Transverse colon (tissue), 4 donors: ENCODE measurements at regions of chr4 and their contacts with region 1.

Region 1: GRCh38 chr4:123396307-123397143 is at the start of gene SPRY1:
- DNase-seq: peak; percentile 93
- H3K4me3 ChIP-seq: peak within 1 kb of the TSS; percentile 67 to 89 (median 75)
- H3K27ac ChIP-seq: peak within 1 kb of the TSS; percentile 91 to 95 (median 95)
- H3K4me1 ChIP-seq: peaks cover 0 to 16% (median 0%) of the 10 kb centered on the region in 4 donors
- H3K27me3 ChIP-seq: no peaks in the 10 kb centered on the region
- CTCF ChIP-seq: no peak
- EP300 ChIP-seq: no peak
- POLR2A ChIP-seq: peak; percentile 85
- total RNA-seq, gene SPRY1: 22.1 to 47.2 (median 33.7) TPM

Region 2: DNA sequence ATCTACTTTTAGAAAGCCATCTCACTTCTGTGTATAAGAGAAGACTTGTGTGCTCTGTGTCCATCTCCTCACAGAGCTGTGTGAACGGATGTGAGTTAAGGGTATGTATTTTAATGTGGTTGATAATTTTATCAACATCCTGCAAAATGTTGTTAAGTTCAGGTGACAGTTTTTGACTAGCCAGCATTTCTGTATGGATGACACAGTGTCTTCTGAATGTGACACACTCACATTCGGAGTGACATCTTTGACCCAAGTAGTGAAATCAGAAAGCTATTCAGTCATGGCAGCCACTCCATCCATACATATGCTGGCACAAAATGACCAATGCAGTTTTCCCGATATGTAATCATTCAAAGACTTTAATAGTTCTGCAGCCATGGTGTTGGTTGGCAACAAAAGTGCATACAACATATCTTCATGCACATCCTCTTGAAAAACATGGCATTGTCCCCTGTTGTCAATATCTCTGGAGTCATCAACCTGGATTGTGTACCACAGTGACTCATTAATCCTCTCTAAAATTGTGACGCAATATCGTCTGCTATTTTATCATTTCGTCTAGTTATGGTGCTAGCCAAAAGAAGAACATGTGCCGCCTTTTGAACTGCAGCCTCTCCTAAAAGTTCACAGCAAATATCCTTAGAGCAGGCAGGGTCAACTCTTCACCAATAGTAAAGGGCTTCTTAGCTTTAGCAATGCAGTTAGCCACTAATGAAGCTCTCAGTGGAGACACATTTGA is 576.6 kb before region 1 on chr4:
- in situ Hi-C with region 1: no loop called
- intact Hi-C with region 1: no loop called
- DNase-seq: no peak
- H3K4me3 ChIP-seq: no peak overlapping the region
- H3K27ac ChIP-seq: no peak overlapping the region
- H3K4me1 ChIP-seq: no peaks in the 10 kb centered on the region
- H3K27me3 ChIP-seq: no peaks in the 10 kb centered on the region
- CTCF ChIP-seq: no peak
- EP300 ChIP-seq: no peak
- POLR2A ChIP-seq: no peak

Region 3: GRCh38 chr4:123102897-123103471 is 293.5 kb before region 1 on chr4:
- in situ Hi-C with region 1: no loop called
- intact Hi-C with region 1: loop called (anchors 10 kb)
- DNase-seq: no peak
- H3K4me3 ChIP-seq: no peak overlapping the region
- H3K27ac ChIP-seq: no peak overlapping the region
- H3K4me1 ChIP-seq: peaks cover 0 to 7% (median 2%) of the 10 kb centered on the region in 4 donors
- H3K27me3 ChIP-seq: no peaks in the 10 kb centered on the region
- CTCF ChIP-seq: peak; percentile 67 to 74 (median 74)
- EP300 ChIP-seq: no peak
- POLR2A ChIP-seq: no peak

Region 4: DNA sequence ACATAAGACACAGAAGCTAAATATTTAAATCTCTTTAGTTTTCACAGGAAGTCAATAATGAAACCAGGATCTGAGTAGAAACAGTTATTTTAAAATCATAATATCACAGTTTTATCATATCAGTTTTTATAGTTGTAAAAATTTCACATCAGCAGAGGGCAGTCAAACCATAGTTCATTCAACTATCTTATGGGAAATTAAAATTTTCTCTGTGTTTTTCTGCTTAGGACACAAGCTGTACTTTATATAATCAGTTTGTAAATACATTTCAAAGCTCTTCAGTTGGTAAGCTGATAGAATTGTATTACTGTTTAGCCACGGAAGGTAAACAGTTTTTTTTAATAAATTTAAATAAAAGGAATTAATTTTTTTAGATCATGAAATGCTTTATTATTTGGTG is 269.3 kb before region 1 on chr4:
- in situ Hi-C with region 1: loop called in 1 of 4 experiments (anchors 25 kb)
- intact Hi-C with region 1: no loop called
- DNase-seq: no peak
- H3K4me3 ChIP-seq: no peak overlapping the region
- H3K27ac ChIP-seq: no peak overlapping the region
- H3K4me1 ChIP-seq: peaks cover 0 to 5% (median 0%) of the 10 kb centered on the region in 4 donors
- H3K27me3 ChIP-seq: no peaks in the 10 kb centered on the region
- CTCF ChIP-seq: peak in 2 of 5 experiments; percentile 20 to 28
- EP300 ChIP-seq: no peak
- POLR2A ChIP-seq: no peak

Region 5: DNA sequence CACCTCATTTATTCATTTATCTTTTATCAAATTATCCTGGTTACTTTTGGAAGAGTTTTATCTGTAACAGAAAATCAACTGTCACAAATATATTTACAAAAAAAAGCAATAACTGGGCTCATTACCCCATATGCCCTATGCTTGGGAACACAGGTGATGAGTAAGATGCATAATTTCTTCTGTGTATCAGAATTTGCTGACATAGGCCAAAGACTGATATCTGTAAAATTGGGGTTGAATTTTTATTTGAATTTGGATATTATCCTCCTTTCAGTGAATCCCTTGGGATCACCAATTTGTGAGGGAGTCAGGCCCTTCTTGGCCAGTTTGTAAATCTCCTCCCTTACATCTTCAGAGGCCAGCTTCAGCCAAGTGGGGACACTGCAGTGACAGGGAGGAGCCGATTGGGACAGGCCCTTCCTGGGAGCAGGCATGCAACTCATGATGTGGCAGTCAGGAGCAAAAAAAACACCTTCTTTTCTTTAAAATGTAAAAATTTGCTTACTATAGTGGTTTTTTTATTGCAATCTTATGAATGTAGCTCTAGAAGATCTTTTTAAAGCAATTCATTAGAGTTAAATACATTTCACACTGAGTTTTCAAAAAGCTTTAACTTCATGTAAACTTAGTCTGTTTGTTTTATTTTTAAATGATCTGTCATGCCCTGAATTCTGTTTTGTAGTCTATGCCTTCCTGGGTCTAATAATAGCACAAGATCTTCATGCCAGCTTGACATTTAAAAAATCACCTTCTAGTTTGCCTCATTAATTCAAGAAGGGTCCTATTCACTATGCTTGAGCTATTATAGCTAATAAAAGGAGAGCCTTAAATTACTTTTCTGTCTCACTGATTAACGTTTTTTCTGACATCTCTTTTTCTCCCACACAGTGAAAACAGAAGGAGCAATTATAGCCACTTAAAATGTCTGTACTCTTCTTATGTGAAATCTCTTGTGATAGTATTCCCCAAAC is 136.6 kb before region 1 on chr4:
- in situ Hi-C with region 1: no loop called
- intact Hi-C with region 1: no loop called
- DNase-seq: no peak
- H3K4me3 ChIP-seq: no peak overlapping the region
- H3K27ac ChIP-seq: no peak overlapping the region
- H3K4me1 ChIP-seq: peaks cover 0 to 19% (median 0%) of the 10 kb centered on the region in 4 donors
- H3K27me3 ChIP-seq: no peaks in the 10 kb centered on the region
- CTCF ChIP-seq: no peak
- EP300 ChIP-seq: no peak
- POLR2A ChIP-seq: no peak

Region 6: DNA sequence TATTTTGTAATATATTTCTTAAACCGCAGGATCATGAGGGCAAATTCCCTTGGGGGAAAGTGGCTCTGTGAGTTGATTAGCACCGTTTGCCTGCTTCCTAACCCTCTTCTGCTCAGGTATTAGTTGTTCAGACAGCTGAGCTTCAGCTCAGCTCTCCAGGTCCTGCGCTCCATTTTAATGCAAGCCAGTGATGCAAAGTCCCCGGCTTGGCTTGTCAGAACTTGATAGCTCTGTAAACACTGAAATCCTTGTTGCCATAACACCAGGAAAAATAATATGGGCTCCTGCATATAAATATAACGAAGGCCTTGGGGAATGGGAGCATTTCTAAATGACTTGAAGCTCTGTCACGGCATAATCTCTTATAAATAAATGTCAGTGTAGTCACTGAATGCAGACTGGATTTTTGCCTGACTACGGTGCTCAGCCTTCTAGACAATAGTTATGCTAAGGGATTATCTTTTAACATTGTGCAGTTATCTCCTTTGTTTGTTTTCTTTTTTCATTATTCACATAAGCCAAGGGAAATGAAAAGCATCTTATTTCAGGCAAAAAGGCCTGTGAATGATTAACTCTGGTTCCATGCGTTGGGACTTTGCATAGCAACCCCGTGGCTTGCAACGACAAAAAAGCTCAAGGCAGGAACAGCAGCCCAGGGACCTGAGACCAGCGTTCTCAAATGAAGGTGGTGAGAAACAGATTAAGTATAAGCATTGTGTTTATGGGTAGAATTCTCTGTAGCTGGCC is 253.3 kb after region 1 on chr4:
- in situ Hi-C with region 1: loop called in 2 of 4 experiments (anchors 10 kb)
- intact Hi-C with region 1: loop called (anchors 10 kb)
- DNase-seq: peak; percentile 38
- H3K4me3 ChIP-seq: peak overlapping the region in 1 of 4 donors; percentile 4
- H3K27ac ChIP-seq: peak overlapping the region; percentile 74 to 81 (median 78)
- H3K4me1 ChIP-seq: peaks cover 17 to 42% (median 26%) of the 10 kb centered on the region in 4 donors
- H3K27me3 ChIP-seq: no peaks in the 10 kb centered on the region
- CTCF ChIP-seq: no peak
- EP300 ChIP-seq: peak; percentile 11
- POLR2A ChIP-seq: no peak

Region 7: DNA sequence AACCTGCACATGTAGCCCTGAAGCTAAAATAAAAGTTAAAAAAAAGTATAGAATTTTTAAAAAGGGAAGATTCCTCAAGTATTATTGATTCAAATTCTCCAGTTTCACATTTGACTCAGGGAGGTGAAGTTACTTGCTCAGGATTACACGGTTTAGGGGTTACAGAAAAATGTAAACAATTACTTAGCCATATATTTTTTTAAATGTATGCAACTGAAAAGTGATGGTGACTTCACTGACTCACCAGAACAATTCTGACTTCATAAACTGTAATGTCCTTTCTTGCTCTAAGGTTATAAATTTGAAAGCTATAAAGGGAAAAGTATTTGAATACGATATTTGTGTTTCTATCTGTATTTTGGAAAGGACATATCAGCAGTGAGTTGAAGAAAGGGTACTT is 371.3 kb after region 1 on chr4:
- in situ Hi-C with region 1: no loop called
- intact Hi-C with region 1: no loop called
- DNase-seq: no peak
- H3K4me3 ChIP-seq: no peak overlapping the region
- H3K27ac ChIP-seq: no peak overlapping the region
- H3K4me1 ChIP-seq: no peaks in the 10 kb centered on the region
- H3K27me3 ChIP-seq: no peaks in the 10 kb centered on the region
- CTCF ChIP-seq: no peak
- EP300 ChIP-seq: no peak
- POLR2A ChIP-seq: no peak

Region 8: DNA sequence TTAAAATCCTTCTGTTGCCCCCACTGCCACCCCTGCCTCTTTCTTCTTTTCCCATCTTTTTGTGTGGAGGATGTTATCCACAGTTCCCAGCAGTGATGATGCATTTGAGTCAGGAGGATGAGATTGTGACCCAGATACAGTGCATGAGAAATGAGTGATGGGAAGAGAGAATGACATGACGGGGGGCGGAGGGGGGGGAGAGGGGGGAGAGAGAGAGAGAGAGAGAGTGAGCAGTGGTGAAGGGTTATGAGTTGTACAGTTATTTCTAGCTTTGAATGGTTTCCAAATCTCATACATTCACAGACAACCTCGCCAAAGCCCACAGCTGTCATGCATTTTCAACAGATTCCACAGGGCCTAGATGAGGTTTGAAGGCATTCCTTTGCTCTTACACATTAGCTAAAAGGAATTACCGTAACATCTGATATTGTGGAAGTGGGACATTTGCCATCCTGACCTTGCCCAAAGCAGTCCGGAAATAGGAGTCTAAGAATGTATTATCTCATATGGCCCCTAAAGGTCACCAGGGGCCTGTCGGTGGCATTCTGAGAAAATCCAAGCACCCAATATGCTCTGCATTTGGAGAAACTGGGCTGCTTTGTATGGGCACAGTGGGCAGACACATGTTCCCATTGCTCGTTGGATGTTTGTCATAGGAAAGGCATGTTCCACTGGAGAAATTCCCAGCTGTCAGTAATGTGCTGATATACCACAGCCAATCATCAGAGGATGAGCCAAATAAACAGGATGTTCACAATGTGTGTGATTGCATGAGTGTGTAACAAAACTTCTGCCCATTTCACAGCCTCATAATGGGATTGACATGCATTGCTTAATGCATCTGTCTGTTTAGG is 435.9 kb after region 1 on chr4:
- in situ Hi-C with region 1: no loop called
- intact Hi-C with region 1: no loop called
- DNase-seq: peak; percentile 10
- H3K4me3 ChIP-seq: no peak overlapping the region
- H3K27ac ChIP-seq: peak overlapping the region; percentile 64 to 73 (median 68)
- H3K4me1 ChIP-seq: peaks cover 0 to 4% (median 2%) of the 10 kb centered on the region in 4 donors
- H3K27me3 ChIP-seq: no peaks in the 10 kb centered on the region
- CTCF ChIP-seq: no peak
- EP300 ChIP-seq: peak; percentile 25
- POLR2A ChIP-seq: no peak

Region 9: GRCh38 chr4:124111922-124112321 is 715.4 kb after region 1 on chr4:
- in situ Hi-C with region 1: loop called in 2 of 4 experiments (anchors 25 kb)
- intact Hi-C with region 1: loop called (anchors 10 kb)
- DNase-seq: no peak
- H3K4me3 ChIP-seq: no peak overlapping the region
- H3K27ac ChIP-seq: no peak overlapping the region
- H3K4me1 ChIP-seq: no peaks in the 10 kb centered on the region
- H3K27me3 ChIP-seq: no peaks in the 10 kb centered on the region
- CTCF ChIP-seq: peak; percentile 38 to 59 (median 46)
- EP300 ChIP-seq: no peak
- POLR2A ChIP-seq: no peak

Region 10: DNA sequence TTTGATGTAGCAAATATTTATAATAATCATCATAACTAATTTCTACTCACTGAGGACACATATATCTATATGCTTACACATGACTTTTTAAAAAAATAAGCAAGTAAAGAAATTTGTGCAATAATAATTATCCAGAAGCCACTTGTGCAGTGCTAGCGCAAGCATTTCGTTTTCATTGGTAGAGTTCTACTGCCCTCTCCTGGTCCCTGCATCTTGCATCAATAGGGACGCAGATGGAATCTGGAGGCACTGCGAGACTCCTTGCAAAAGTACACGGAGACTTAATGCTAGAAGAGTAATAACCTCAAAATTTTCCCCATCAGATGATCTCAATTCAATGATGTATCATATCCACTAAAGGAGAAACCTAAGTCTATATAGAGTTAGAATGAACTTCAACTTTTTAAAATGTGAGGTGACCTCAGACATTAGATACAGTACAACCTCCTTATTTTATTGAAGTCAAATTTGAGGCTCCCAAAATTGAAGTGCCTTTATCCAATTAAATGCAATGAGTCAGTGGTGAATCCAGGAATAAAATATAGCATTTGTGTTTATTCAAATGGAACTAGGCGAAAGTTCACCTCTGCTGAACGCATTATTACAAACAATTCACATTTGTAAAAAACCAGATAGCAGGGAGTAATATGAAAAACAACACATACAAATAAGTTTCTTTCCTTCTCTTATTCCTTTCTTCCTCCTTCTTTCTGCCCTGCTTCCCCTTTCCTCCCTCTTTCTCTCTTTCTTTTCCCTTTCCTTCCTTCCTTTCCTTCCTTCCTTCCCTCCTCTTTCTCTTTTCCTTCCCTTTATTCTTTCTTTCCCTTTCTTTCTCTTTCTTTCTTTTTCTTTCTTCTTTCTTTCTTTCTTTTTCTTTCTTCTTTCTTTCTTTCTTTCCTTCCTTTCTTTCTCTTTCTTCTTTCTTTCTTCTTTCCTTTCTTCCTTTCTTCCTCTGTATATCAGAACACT is 866.0 kb after region 1 on chr4:
- in situ Hi-C with region 1: loop called in 1 of 4 experiments (anchors 25 kb)
- intact Hi-C with region 1: no loop called
- DNase-seq: peak; percentile 56
- H3K4me3 ChIP-seq: no peak overlapping the region
- H3K27ac ChIP-seq: no peak overlapping the region
- H3K4me1 ChIP-seq: peaks cover 0 to 10% (median 0%) of the 10 kb centered on the region in 4 donors
- H3K27me3 ChIP-seq: no peaks in the 10 kb centered on the region
- CTCF ChIP-seq: peak; percentile 60 to 79 (median 78)
- EP300 ChIP-seq: no peak
- POLR2A ChIP-seq: no peak